ENCODE measurements at regions of chr16 and their contacts with region 1.

Region 1: DNA sequence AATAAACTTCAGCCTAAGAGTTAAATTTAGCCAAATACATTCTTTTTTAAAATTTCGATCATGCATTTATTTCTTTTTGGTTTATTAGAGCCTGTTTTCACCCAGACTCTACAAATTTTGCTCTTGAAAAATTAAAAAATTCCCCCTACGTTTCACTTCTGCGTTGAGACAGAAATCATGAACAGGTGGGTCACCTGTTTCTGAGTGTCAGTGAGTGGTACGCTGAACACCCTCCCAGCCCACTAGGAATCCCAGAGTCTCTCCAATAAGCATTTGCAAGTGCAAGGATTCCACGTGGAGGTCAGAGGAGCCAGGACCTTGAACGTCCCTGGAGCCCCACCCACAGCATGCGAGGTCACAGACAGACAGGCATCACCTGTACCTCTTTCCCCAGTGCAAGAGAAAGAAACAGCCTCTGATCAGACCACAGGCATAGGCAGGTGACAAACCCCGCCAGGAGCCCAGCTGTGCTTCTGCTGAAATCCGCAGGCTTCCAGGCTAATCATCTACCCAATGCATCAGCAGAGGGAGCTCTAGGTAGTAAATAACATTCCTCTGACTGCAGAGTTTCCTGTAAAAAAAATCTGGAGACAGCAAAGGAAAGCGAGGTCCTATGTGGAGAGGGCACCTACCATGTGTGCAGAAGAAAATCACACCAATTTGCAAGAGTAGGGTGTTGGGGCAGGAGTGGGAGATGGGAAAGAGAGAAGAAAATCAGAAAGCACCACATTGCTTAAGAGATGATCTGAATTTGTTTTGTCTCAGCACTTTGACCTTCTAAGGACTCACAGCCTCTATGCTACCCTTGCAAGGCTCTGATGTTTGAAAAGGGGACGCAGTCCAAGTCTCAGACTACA is 5.9 kb upstream of the XYLT1 start:
- DNase-seq: peak; percentile 62
- CTCF ChIP-seq: peak; percentile 61

Region 2: GRCh38 chr16:17266608-17267313 is 209.9 kb before region 1 on chr16:
- in situ Hi-C with region 1: loop called (anchors 10 kb)
- DNase-seq: no peak
- CTCF ChIP-seq: no peak

Region 3: GRCh38 chr16:17532116-17532995 is 55.7 kb after region 1 on chr16:
- in situ Hi-C with region 1: no loop called
- DNase-seq: peak; percentile 26
- CTCF ChIP-seq: no peak

Region 4: DNA sequence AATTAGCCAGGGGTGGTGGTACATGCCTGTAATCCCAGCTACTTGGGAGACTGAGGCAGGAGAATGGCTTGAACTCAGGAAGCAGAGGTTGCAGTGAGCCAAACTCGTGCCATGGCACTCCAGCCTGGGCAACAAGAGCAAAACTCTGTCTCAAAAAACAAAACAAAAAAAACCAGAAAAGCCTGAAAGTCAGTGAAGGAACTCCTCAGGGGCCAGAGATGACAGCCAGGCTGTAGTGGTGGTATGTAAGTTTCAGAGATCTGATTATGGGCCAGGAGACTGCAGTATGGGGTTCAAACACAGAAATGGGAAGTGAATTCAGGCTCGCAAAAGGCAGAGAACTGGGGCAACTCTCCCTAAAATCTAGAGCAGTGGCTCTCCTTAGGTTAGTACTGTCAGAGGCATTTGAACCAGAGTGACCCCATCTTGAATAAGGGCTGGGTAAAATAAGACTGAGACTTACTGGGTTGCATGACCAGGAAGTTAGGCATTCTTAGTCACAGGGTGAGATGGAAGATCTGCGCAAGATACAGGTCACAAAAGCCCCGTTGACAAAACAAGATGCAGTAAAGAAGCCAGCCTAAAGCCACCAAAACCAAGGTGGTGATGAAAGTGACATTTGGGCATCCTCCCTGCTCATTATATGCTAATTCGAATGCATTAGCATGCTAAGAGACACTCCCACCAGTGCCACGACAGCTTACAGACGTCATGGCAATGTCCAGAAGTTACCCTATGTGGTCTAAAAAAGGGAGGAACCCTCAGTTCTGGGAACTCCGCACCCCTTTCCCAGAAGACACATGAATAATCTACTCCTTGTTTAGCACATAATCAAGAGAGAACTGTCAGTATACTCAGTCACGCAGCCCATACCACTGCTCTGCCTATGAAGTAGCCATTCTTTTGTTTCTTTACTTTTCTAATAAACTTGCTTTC is 114.3 kb after region 1 on chr16:
- in situ Hi-C with region 1: no loop called
- DNase-seq: no peak
- CTCF ChIP-seq: no peak

Measured in GM13976 (cell line).